ENCODE measurements at regions of chr9 and their contacts with region 1.

Region 1: DNA sequence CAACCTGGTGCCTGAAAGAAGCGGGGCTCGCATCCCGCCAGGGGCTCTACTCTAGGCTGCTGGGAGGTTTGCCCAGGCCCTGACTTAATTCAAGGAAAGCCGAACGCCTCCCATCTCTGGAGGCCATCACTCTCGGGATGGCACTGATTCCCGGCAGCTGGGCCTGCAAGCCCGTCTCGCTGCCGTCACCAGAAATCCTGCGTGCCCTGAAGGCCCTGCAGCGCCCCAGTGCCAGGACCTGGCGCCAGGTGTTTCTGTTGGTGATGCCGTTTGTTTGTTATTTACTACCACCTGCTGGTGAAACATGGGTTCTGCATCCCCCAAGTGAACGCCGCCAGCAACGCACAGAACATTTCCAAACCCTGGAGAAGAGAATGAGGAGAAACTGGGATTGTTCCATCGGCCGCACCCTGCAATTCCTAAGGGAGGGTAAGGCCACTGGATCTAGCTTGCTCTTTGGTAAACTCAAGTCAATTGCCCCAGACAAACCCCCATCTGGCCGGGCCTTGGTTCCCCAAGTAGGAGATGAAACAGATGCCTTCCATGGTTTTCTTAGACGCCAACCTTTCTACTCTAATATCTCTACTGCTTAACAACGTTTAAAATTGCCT is 77.9 kb downstream of the AK8 start:
- DNase-seq: peak; percentile 35
- ATAC-seq: peak; percentile 88
- H3K4me3 ChIP-seq: no peak overlapping the region
- H3K27ac ChIP-seq: no peak overlapping the region
- H3K4me1 ChIP-seq: peaks cover 2% of the 10 kb centered on the region; the same call in 1 of the 2 replicates
- H3K27me3 ChIP-seq: no peaks in the 10 kb centered on the region
- CTCF ChIP-seq: peak; percentile 79

Region 2: GRCh38 chr9:132507746-132508469 is 292.2 kb before region 1 on chr9:
- CTCF ChIA-PET with region 1: no interaction called
- POLR2A ChIA-PET with region 1: no interaction called
- in situ Hi-C with region 1: no loop called
- intact Hi-C with region 1: loop called (anchors 10 kb)
- DNase-seq: peak; percentile 32
- ATAC-seq: peak; percentile 88
- H3K4me3 ChIP-seq: no peak overlapping the region
- H3K27ac ChIP-seq: no peak overlapping the region
- H3K4me1 ChIP-seq: no peaks in the 10 kb centered on the region
- H3K27me3 ChIP-seq: no peaks in the 10 kb centered on the region; the same call in 1 of the 2 replicates
- CTCF ChIP-seq: peak; percentile 83

Region 3: DNA sequence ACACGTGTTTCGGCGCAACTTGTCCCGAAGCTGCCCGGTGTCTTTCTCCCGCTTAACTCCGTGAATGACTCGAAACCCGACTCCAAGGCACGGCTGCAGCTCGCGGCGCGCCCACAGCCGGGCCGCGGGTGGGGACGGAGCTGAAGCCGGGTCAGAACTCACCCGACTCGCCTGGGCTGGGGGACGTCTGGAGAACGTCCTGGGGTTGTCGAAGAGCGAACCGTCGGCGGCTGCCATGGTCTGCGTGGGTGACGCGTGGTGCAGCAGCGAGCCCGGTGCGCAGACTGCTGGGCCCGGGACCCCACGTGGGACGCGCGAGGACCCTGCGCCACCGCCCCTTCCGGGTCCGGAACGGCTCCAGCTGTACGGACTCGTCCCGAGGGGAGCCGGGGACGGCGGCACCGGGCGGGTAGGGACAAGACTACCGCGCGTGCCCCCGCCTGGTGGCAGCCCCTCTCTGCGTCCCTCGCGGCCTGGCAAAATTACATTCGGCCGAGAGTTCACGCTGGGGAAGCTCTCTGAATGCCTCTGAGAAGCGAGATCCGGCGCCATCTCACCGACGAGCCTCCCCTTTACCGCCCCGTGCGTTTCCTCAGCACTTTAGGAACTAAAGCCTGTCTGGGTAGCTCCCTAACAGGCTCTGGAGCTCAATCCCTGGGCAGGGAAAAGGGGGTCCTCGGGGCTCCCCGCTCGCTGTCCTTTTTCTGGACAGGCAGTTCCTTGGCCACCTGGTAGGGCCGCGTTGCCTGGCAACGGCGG is 130.3 kb before region 1 on chr9 and contains the start of gene DDX31:
- CTCF ChIA-PET with region 1: no interaction called
- POLR2A ChIA-PET with region 1: no interaction called
- in situ Hi-C with region 1: no loop called
- intact Hi-C with region 1: loop called (anchors 10 kb)
- DNase-seq: no peak
- ATAC-seq: peak; percentile 95
- H3K4me3 ChIP-seq: peak within 1 kb of the TSS; percentile 71 to 83
- H3K27ac ChIP-seq: peak within 1 kb of the TSS; percentile 92
- H3K4me1 ChIP-seq: peaks cover 8% of the 10 kb centered on the region; the same call in 1 of the 2 replicates
- H3K27me3 ChIP-seq: no peaks in the 10 kb centered on the region
- CTCF ChIP-seq: no peak
- total RNA-seq, gene DDX31: 17.5 TPM

Region 4: GRCh38 chr9:132973713-132974112 is 173.6 kb after region 1 on chr9:
- CTCF ChIA-PET with region 1: no interaction called
- POLR2A ChIA-PET with region 1: no interaction called
- in situ Hi-C with region 1: no loop called
- intact Hi-C with region 1: loop called (anchors 10 kb)
- DNase-seq: no peak
- ATAC-seq: no peak; the same call in 1 of the 2 replicates
- H3K4me3 ChIP-seq: no peak overlapping the region
- H3K27ac ChIP-seq: no peak overlapping the region
- H3K4me1 ChIP-seq: no peaks in the 10 kb centered on the region
- H3K27me3 ChIP-seq: peaks cover 2% of the 10 kb centered on the region; the same call in 1 of the 2 replicates
- CTCF ChIP-seq: no peak

Measured in Panc1 (cell line).